Activated B cell treated with CpG ODN at 0.5 μM for 24 hours (primary cell): ENCODE measurements at regions of chr3 and their contacts with region 1.

Region 1: DNA sequence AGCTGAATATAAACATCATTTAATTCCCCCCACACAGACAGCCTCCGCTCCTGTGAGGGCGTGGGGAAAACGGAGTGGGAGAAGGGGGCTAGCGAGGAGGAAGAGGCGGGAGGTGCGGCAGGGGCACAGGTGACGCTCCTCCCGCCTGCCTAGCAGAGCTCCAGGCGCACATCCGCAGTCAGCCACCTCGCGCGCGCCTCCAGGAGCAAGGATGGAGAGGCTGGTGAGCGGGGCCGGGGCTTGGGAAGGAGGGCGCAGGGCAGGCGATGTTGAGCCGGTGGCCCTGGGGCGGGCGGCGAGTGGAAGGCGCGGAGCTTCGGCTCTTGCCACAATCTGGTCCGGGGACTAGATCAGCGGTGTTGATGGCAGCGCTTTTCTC is at the start of gene CD200:
- DNase-seq: peak; percentile 45
- ATAC-seq: peak; percentile 77
- H3K4me3 Mint-ChIP-seq: peak within 1 kb of the TSS; percentile 94
- H3K27ac Mint-ChIP-seq: peak within 1 kb of the TSS; percentile 94
- H3K4me1 Mint-ChIP-seq: peaks cover 59% of the 10 kb centered on the region
- H3K27me3 Mint-ChIP-seq: no peaks in the 10 kb centered on the region
- CTCF ChIP-seq: no peak
- total RNA-seq, gene CD200: 19.0 and 19.4 TPM in 2 replicates

Region 2: GRCh38 chr3:112303764-112304325 is 29.1 kb before region 1 on chr3:
- CTCF ChIA-PET with region 1: no interaction called
- POLR2A ChIA-PET with region 1: interaction called, 13 read pairs
- intact Hi-C with region 1: no loop called
- DNase-seq: peak; percentile 20
- ATAC-seq: peak; percentile 88
- H3K4me3 Mint-ChIP-seq: no peak overlapping the region
- H3K27ac Mint-ChIP-seq: no peak overlapping the region
- H3K4me1 Mint-ChIP-seq: peaks cover 7% of the 10 kb centered on the region
- H3K27me3 Mint-ChIP-seq: no peaks in the 10 kb centered on the region
- CTCF ChIP-seq: no peak

Region 3: DNA sequence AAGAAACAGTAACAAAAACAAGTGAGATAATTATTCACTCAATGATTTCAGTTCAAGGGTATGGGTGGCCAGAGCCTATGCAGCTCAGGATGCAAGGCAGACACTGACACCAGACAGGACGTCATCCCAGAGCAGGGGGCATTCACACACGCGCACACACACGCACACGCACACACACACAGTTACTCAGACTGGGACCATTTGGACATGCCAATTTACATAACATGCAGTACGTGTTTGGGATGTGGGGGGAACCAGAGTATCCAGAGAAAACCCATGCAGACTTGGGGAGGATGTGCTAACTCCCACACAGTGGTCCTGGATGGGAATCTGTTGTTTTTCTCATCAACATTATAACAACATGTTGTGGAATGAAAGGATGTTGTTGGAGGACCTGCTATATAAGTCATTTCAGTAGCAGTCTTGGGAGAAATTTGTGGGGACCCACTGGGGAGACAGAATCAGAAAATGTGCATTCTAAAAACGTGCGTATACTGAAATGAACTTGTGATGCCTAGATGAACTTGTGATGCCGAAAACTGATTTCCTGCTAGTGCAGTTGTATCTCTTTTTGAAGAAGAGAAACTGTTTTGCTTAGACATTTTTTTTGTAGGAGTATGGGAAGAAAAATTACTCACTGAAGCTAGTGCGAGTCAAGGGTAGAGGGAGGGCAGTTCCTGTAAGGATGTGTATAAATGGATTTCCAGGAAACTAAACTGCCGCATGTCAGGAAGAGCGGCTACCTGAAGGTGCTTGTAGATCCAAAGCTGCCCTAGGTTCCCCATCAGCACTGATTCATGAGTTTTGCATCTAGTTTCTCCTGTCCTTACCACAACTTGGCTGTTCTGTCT is 25.2 kb after region 1 on chr3:
- CTCF ChIA-PET with region 1: no interaction called
- POLR2A ChIA-PET with region 1: interaction called, 11 read pairs
- intact Hi-C with region 1: no loop called
- DNase-seq: no peak
- ATAC-seq: peak; percentile 61
- H3K4me3 Mint-ChIP-seq: peak overlapping the region; percentile 58
- H3K27ac Mint-ChIP-seq: peak overlapping the region; percentile 82
- H3K4me1 Mint-ChIP-seq: peaks cover 28% of the 10 kb centered on the region
- H3K27me3 Mint-ChIP-seq: no peaks in the 10 kb centered on the region
- CTCF ChIP-seq: no peak

Region 4: DNA sequence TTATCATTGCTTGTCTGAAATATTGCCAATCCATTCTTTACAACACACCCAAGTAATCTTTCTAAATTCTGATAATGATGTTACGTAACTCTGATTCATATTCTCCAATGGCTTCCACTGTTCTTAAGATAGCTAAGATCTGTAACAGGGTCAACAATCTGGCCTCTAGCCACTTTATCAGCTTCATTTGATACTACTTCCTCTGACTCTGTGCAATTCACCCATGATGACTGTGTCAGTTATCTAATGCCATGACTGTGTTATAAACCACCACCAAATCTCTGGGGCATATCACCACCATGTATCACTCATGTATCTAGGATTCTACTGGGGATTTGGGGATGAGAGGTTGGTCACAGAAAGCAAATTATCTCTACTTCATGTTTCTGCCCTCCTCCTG is 44.0 kb after region 1 on chr3:
- CTCF ChIA-PET with region 1: no interaction called
- POLR2A ChIA-PET with region 1: interaction called, 6 read pairs
- intact Hi-C with region 1: loop called (anchors 5 kb)
- DNase-seq: no peak
- ATAC-seq: peak; percentile 71
- H3K4me3 Mint-ChIP-seq: no peak overlapping the region
- H3K27ac Mint-ChIP-seq: no peak overlapping the region
- H3K4me1 Mint-ChIP-seq: peaks cover 56% of the 10 kb centered on the region
- H3K27me3 Mint-ChIP-seq: no peaks in the 10 kb centered on the region
- CTCF ChIP-seq: no peak

Region 5: DNA sequence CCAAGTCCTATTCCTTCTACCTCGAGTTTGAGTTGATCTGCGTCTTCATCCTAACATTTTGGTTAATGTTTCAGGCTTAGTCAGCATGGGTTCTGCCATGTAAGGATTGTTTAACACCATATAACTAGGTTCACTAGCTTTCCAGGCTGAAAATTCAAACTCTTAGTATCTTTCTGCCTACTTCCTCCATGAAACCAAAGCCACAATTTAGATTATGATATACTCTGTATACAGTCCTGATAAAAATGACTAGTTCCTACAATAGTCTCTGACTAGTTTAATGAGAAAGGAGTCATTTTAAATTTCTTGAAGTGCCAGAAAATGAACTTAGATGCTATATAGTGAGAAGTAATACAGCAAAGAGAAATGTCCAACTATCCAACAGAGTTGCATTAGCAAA is 172.9 kb after region 1 on chr3:
- CTCF ChIA-PET with region 1: interaction called, 5 read pairs
- POLR2A ChIA-PET with region 1: interaction called, 137 read pairs
- intact Hi-C with region 1: no loop called
- DNase-seq: no peak
- ATAC-seq: peak; percentile 18
- H3K4me3 Mint-ChIP-seq: peak overlapping the region; percentile 12
- H3K27ac Mint-ChIP-seq: peak overlapping the region; percentile 84
- H3K4me1 Mint-ChIP-seq: peaks cover 93% of the 10 kb centered on the region
- H3K27me3 Mint-ChIP-seq: no peaks in the 10 kb centered on the region
- CTCF ChIP-seq: no peak

Region 6: GRCh38 chr3:114011059-114011797 is 1678.2 kb after region 1 on chr3:
- CTCF ChIA-PET with region 1: no interaction called
- POLR2A ChIA-PET with region 1: no interaction called
- intact Hi-C with region 1: no loop called
- DNase-seq: no peak
- ATAC-seq: peak; percentile 82
- H3K4me3 Mint-ChIP-seq: peak overlapping the region; percentile 81
- H3K27ac Mint-ChIP-seq: peak overlapping the region; percentile 89
- H3K4me1 Mint-ChIP-seq: peaks cover 50% of the 10 kb centered on the region
- H3K27me3 Mint-ChIP-seq: no peaks in the 10 kb centered on the region
- CTCF ChIP-seq: no peak